Activated CD4-positive, alpha-beta T cell treated with anti-CD3 and anti-CD28 coated beads, Interleukin-2, amount 10 ng/mL, durations not matched to agents 24 days and 14 days (primary cell): ENCODE measurements at regions of chr7 and their contacts with region 1.

Region 1: DNA sequence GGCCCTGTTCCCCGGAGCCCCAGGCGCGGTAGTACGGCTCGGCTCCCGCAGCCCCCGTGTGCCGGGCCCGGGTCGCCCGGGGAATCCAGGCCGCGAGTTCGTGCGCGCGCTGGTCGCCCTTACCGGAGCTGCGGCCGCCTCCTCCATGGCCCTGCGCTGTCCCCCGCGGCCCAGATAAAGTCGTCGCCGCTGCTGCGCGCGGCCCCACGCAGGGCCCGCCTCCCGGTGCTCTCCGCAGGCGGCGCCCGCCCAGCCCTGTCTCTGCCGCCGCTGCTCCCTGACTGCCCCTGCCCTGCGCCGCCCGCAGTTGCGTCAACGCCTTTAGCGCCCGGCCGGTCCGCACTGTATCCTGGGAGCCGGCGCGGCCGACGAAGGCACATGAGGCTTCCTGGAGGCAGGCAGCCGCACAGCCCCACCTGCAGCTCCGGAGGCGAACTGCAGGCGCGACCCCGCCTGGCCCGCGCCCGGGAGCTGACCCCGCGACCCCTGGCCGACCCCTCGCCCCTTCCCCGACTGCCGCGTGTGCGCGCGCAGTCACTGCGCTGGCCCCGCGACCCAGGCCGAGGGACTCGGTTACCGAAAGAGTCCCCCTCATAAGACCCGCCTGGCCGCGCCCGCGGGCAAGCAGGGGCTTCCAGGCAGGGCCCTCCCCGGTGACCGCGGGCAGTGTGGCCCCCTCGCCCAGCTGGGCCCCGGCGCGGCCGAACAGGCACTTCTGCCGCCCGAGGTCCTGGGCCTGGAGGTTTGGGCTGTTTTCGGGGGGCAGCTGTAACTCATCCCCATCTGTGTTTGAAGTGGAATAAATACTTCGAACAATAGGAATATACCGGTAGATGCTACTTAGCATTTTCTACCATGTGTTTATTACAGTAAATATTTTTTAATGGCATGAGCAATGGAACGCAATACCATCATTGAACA is 127.1 kb upstream of the ZNF746 start:
- DNase-seq: peak; percentile 98
- H3K4me3 Mint-ChIP-seq: peak overlapping the region; percentile 91
- H3K27ac Mint-ChIP-seq: peak overlapping the region; percentile 91
- H3K4me1 Mint-ChIP-seq: peaks cover 33% of the 10 kb centered on the region
- H3K27me3 Mint-ChIP-seq: peaks cover 14% of the 10 kb centered on the region

Region 2: DNA sequence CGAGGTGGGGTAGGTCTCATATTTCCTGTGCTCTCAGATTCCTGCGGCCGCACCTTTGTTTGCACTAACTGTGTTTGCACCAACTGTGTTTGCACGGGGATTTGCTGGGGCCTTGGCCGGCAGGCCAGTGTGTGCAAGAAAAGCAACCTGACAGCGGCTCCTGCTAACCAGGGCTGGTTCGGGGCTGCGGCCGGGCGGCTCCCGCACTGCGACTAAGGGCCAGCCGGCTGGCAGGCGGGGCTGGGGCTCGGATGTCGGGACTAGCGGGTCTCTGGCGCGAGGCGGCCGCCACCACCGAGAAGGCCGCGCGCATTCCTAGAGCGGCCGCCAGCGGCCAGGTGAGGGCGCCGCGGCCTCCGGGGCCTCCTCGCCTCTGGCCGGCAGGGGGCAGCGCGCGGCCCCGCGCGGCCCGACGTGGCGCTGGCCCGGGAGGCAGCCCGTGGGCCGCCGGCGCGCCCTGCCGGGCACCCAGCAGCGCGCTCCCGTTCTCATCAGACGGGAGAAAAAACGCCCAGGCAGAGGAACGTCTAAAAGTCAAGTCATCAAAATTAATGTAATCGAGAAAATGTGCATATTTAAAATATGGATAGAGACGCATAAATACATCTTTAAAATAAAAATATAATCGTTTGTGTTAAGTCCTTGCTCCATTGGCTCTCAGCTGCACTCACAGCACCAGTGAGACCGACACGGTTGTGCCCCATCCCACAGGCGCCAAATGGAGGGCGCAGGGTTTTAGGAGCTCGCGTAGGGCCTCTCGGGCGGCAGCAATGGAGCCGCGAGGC is 202.4 kb before region 1 on chr7:
- intact Hi-C with region 1: loop called (anchors 1 kb)
- DNase-seq: peak; percentile 94
- H3K4me3 Mint-ChIP-seq: peak overlapping the region; percentile 79
- H3K27ac Mint-ChIP-seq: peak overlapping the region; percentile 66
- H3K4me1 Mint-ChIP-seq: peaks cover 5% of the 10 kb centered on the region
- H3K27me3 Mint-ChIP-seq: peaks cover 6% of the 10 kb centered on the region

Region 3: DNA sequence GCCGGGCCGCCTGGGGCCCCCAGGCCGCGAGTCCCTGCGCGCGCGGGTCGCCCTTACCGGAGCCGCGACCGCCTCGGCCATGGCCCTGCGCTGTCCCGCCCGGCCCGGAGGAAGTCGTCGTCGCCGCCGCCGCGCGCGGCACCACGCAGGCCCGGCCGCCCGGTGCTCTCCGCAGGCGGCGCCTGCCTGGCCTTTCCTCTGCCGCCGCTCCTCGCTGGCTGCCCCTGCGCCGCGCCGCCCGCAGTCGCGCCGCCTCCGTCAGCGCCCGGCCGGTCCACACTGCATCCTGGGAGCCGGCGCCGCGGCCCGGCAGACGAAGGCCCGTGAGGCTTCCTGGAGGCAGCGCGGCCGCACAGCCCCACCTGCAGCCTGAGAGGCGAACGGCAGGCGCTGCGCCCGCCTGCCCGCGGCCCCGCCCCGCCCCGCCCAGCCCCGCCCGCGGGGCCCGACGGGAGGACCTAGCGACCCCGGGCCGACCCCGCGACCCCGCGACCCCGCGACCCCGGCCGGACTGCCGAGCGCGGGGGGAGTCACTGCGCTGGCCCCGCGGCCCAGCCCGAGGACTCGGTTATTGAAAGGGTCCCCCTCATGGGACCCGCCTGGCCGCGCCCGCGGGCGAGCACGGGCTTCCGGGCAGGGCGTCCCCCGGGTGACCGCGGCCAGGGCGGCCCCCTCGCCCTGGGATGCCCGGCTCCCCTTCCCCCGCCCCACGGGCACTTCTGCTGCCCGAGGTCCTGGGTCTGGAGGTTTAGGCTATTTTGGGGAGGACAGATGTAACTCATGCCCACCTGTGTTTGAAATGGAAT is 127.0 kb before region 1 on chr7 and contains the start of gene ZNF746:
- intact Hi-C with region 1: loop called (anchors 1 kb)
- DNase-seq: peak; percentile 95
- H3K4me3 Mint-ChIP-seq: peak within 1 kb of the TSS; percentile 97
- H3K27ac Mint-ChIP-seq: peak within 1 kb of the TSS; percentile 96
- H3K4me1 Mint-ChIP-seq: peaks cover 19% of the 10 kb centered on the region
- H3K27me3 Mint-ChIP-seq: peaks cover 2% of the 10 kb centered on the region
- total RNA-seq, gene ZNF746: 23.3 and 24.8 TPM in 2 replicates

Region 4: DNA sequence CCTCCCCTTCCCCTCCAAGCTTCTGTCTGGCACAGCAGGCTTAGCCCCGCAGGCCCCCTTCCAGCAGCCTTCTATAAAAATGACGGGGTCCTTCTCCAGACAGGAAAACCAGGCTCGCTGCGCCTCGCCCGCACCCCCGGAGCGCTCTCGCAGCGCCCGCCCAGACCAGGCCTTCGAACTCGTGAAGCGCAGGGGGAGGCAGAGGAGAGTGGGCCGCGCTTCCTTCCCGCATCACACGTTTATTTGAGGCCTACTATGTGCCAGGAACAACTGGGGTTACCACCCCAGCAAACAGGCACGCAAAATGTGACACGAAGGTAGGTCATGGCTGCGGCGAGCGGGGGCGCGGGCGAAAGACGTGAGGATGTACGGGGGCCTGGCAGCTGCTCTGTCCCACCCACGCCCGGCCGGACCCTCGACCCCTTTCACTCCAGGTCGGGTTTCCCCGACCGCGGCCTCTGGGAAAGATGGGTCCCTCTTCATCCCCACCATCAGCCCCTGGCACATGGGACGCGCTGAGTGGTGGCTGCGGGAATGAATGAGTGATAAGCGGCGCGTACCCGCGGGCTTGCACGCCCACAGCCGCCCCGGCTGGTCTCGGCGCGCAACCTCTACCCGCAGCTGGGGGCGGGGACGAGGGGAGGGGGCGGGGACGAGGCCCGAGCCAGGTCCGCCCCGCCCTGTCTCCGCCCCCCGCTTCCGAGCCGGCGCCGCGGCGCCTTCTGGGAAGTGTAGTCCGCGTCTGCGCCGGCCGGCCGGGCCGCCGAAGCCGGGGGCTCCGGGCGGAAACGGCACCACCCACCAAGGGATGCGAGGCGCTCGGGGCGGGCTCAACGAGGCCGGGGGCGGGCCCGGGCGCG is 89.6 kb after region 1 on chr7:
- intact Hi-C with region 1: loop called (anchors 10 kb)
- DNase-seq: peak; percentile 95
- H3K4me3 Mint-ChIP-seq: peak overlapping the region; percentile 90
- H3K27ac Mint-ChIP-seq: peak overlapping the region; percentile 71
- H3K4me1 Mint-ChIP-seq: peaks cover 17% of the 10 kb centered on the region
- H3K27me3 Mint-ChIP-seq: no peaks in the 10 kb centered on the region

Region 5: GRCh38 chr7:149742075-149742701 is 117.5 kb after region 1 on chr7:
- intact Hi-C with region 1: no loop called
- DNase-seq: peak; percentile 89
- H3K4me3 Mint-ChIP-seq: peak overlapping the region; percentile 81
- H3K27ac Mint-ChIP-seq: no peak overlapping the region
- H3K4me1 Mint-ChIP-seq: peaks cover 10% of the 10 kb centered on the region
- H3K27me3 Mint-ChIP-seq: peaks cover 45% of the 10 kb centered on the region

Region 6: DNA sequence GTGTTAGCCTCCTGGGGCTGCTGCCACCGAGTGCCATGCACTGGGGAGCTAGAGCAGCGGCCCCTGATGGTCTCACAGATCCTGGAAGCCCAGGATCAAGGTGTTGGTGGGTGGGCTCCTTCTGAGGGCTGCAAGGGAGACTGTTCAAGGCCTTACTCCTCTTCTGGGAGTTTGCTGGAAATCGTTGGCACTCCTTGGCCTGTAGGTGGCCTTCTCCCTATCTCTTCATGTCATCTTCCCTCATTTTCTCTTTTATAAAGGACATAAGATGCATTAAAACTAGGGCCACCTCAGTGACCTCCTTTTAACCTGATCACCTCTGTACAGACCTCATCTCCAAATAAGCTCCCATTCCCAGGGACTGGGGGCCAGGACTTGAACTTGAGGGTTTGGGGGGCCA is 186.5 kb after region 1 on chr7:
- intact Hi-C with region 1: no loop called
- DNase-seq: no peak
- H3K4me3 Mint-ChIP-seq: no peak overlapping the region
- H3K27ac Mint-ChIP-seq: no peak overlapping the region
- H3K4me1 Mint-ChIP-seq: no peaks in the 10 kb centered on the region
- H3K27me3 Mint-ChIP-seq: no peaks in the 10 kb centered on the region

Region 7: GRCh38 chr7:149873074-149873969 is 248.6 kb after region 1 on chr7 and contains the start of gene ATP6V0E2:
- intact Hi-C with region 1: loop called (anchors 10 kb)
- DNase-seq: peak; percentile 98
- H3K4me3 Mint-ChIP-seq: peak within 1 kb of the TSS; percentile 90
- H3K27ac Mint-ChIP-seq: peak within 1 kb of the TSS; percentile 92
- H3K4me1 Mint-ChIP-seq: peaks cover 71% of the 10 kb centered on the region
- H3K27me3 Mint-ChIP-seq: no peaks in the 10 kb centered on the region
- total RNA-seq, gene ATP6V0E2: 43.5 and 46.7 TPM in 2 replicates